ENCODE measurements at regions of chr12 and their contacts with region 1.

Region 1: GRCh38 chr12:55926738-55927587 is 731 bp downstream of the PYM1 start:
- DNase-seq: peak; percentile 96
- H3K4me3 Mint-ChIP-seq: peak overlapping the region; percentile 99
- H3K27ac Mint-ChIP-seq: peak overlapping the region; percentile 100
- H3K4me1 Mint-ChIP-seq: peaks cover 44% of the 10 kb centered on the region
- H3K27me3 Mint-ChIP-seq: no peaks in the 10 kb centered on the region

Region 2: DNA sequence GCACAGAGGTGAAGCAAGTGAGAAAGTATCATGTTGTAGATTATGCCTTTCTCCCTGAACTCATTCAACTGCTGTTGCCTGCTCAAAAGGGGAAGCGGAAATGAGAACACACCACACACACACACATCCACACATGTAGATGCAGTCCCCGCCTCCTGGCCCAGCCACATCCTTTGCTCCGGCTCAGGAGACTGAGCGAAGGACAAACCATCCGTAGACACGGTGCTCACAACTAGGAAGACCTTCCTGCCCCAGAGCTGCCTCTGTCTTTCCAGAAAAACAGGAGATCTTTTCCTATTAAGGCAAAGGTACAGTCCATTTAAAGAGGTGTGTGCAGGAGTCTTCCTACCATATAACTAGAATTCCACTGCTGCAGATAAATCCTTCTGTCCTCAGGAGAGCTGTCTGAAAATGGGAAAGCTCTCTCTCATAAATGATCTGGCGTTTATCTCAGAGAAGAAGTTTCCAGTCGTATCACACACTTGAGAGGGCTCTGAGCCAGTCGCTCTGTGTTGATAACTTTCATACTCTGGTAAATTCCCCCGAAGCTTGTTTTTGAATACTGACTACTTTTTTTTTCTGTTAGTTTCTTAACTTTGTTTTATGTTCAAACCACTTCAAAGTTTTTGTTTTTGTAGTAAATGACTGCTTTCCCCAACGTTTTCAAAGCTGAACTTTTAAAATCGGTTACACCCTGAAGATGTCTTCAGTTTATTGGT is 942.1 kb before region 1 on chr12 and contains the start of gene TESPA1:
- CTCF ChIA-PET with region 1: no interaction called
- intact Hi-C with region 1: loop called (anchors 2 kb)
- DNase-seq: peak; percentile 94
- H3K4me3 Mint-ChIP-seq: peak within 1 kb of the TSS; percentile 75
- H3K27ac Mint-ChIP-seq: peak within 1 kb of the TSS; percentile 89
- H3K4me1 Mint-ChIP-seq: peaks cover 56% of the 10 kb centered on the region
- H3K27me3 Mint-ChIP-seq: no peaks in the 10 kb centered on the region
- total RNA-seq, gene TESPA1: 43.9 to 45.1 TPM

Region 3: GRCh38 chr12:55817346-55818139 is 109.4 kb before region 1 on chr12 and contains the starts of genes ORMDL2 and SARNP:
- CTCF ChIA-PET with region 1: interaction called, 13 read pairs
- intact Hi-C with region 1: loop called (anchors 1 kb)
- DNase-seq: peak; percentile 99
- H3K4me3 Mint-ChIP-seq: no peak within 1 kb of the TSS
- H3K27ac Mint-ChIP-seq: no peak within 1 kb of the TSS
- H3K4me1 Mint-ChIP-seq: peaks cover 43% of the 10 kb centered on the region
- H3K27me3 Mint-ChIP-seq: no peaks in the 10 kb centered on the region
- total RNA-seq, gene ORMDL2: 23.8 to 26.4 TPM
- total RNA-seq, gene SARNP: 100 to 101 TPM

Region 4: DNA sequence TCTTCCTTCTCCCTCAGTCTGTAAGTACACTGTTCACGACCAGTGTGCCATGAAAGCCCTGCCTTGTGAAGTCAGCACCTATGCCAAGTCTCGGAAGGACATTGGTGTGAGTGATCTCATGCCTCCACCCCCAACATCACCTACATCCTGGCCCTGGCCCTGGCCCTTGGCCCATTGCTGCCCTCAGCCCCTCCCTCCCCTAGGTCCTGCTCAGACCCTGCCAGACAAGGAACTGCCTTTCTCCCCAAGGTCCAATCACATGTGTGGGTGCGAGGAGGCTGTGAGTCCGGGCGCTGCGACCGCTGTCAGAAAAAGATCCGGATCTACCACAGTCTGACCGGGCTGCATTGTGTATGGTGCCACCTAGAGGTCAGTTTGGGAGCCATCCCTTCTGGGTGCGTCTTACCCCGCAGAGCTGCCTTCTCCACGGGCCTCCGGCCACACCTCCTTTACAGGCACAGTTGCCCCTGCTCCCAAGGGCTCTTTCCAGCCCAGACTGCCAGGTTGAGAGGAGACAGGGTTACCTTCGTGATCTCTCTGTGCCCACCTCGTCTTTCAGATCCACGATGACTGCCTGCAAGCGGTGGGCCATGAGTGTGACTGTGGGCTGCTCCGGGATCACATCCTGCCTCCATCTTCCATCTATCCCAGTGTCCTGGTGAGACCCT is 13.2 kb after region 1 on chr12:
- CTCF ChIA-PET with region 1: interaction called, 43 read pairs
- intact Hi-C with region 1: loop called (anchors 1 kb)
- DNase-seq: peak; percentile 94
- H3K4me3 Mint-ChIP-seq: no peak overlapping the region
- H3K27ac Mint-ChIP-seq: peak overlapping the region; percentile 74
- H3K4me1 Mint-ChIP-seq: peaks cover 72% of the 10 kb centered on the region
- H3K27me3 Mint-ChIP-seq: no peaks in the 10 kb centered on the region

Region 5: GRCh38 chr12:56104109-56104814 is 177.3 kb after region 1 on chr12 and contains the start of gene PA2G4:
- CTCF ChIA-PET with region 1: no interaction called
- intact Hi-C with region 1: loop called (anchors 1 kb)
- DNase-seq: peak; percentile 99
- H3K4me3 Mint-ChIP-seq: peak within 1 kb of the TSS; percentile 99
- H3K27ac Mint-ChIP-seq: peak within 1 kb of the TSS; percentile 99
- H3K4me1 Mint-ChIP-seq: peaks cover 38% of the 10 kb centered on the region
- H3K27me3 Mint-ChIP-seq: no peaks in the 10 kb centered on the region
- total RNA-seq, gene PA2G4: 398 to 411 TPM

Region 6: DNA sequence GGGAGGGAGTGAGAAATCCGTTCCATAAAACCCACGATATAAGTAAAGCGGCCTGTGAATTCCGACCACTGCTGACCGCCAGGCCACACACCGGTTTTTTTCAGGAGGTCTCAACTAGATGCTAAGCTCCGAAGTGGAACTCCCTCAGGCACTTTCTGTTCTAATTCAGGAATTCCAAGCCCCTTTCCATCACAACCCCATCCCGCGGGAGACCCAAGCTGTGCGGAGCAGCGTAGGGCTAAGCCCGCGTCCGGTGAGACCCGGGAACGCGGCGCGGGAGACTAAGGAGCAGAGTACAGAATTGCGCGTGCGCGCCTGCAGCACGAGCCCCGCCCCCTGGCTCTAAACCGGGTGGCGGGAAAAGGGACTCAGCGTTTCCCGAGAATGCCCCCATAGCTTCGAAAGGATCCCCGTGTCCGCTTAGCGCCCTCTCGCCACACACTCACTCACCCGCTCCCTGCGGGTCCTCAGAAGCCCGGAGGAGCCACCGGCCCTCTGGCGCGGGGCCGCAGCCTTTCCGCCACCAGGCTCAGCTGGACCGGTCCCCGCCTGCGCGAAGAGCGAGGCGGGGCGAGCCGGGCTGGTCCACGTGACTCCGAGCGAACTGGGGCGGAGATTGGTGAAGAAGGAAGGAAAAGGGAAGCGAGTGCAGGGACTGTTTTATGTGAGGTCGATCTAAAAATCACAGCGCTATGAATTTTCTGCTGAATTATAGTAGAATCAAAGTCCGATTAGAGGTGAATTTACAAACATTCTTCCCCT is 522.1 kb after region 1 on chr12 and contains the start of gene TIMELESS:
- CTCF ChIA-PET with region 1: no interaction called
- intact Hi-C with region 1: loop called (anchors 2 kb)
- DNase-seq: peak; percentile 90
- H3K4me3 Mint-ChIP-seq: peak within 1 kb of the TSS; percentile 89
- H3K27ac Mint-ChIP-seq: peak within 1 kb of the TSS; percentile 96
- H3K4me1 Mint-ChIP-seq: peaks cover 16% of the 10 kb centered on the region
- H3K27me3 Mint-ChIP-seq: no peaks in the 10 kb centered on the region
- total RNA-seq, gene TIMELESS: 69.9 to 70.8 TPM